PC-3 (cell line): ENCODE measurements at regions of chr2 and their contacts with region 1.

Region 1: DNA sequence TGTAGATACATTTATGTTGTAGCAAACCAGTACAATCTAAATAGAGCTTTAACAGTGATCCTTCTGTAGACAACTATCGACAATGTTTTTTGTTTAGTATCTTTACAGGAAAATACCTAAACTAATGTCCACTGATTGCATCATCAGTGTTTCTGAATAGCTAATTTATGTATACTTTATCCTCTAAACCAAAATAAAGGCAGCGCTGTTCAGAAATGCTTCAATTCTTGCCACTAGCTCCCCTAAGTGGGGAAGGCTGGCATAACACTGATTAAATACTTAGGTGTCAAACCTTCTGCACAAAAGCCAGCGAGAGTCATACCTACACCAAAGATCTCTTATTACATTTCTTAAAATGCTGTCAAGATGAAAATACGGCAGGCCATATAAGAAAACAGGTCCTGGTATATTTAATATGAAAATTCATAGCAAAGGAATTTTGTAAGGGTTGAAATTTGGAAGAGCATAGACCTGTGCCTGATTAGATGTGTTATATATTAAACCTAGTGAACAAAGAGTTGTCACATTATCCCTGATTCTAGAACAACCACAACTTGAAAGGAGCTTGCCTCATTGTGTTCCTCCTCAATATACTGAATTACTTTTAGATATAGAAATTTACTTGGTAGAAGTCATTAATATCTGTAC is 1693.4 kb upstream of the SLC39A10 start:
- DNase-seq: peak; percentile 66
- ATAC-seq: peak; percentile 70
- H3K4me3 ChIP-seq: no peak overlapping the region
- H3K27ac ChIP-seq: no peak overlapping the region
- H3K4me1 ChIP-seq: no peaks in the 10 kb centered on the region
- H3K27me3 ChIP-seq: no peaks in the 10 kb centered on the region
- CTCF ChIP-seq: peak; percentile 82

Region 2: DNA sequence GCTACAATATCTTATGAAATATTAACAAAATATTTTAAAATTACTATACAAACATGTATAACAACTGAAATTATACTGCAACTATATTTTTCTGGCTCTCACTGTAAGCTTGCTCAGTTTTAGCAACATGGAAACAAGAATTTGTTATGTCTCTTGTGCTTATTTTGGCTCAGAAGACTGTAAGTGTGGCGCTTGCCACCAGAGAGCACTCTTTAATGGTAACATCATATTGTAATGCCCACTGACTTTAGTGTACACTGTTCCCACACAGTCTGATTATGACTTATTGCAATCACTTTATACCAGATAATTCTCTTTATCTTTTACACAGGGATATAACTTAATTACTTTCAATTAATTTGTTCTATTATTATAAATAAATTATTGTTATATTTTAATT is 268.2 kb before region 1 on chr2:
- CTCF ChIA-PET with region 1: interaction called, 3 read pairs
- POLR2A ChIA-PET with region 1: no interaction called
- intact Hi-C with region 1: loop called (anchors 1 kb)
- DNase-seq: peak; percentile 56
- ATAC-seq: peak; percentile 91
- H3K4me3 ChIP-seq: no peak overlapping the region
- H3K27ac ChIP-seq: no peak overlapping the region
- H3K4me1 ChIP-seq: no peaks in the 10 kb centered on the region
- H3K27me3 ChIP-seq: no peaks in the 10 kb centered on the region
- CTCF ChIP-seq: peak; percentile 61

Region 3: DNA sequence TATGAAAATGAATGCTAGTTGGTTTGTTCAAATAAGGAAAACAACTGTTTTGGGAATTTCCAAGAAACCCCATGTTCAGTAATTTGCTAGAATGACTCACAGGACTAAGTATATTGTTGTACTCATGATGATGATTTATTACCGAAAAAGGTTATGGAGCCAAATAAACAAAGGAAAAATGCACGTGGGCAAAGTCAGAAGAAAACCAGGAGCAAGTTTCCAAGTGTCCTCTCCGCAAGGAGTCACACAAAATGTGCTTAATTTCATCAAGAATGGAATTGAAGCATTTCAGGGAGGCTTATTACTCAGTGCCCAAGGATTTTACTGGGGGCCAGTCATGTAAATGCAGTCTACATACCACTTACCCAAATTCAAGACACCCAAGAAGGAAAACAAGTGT is 116.5 kb before region 1 on chr2:
- CTCF ChIA-PET with region 1: no interaction called
- POLR2A ChIA-PET with region 1: no interaction called
- intact Hi-C with region 1: loop called (anchors 5 kb)
- DNase-seq: peak; percentile 58
- ATAC-seq: peak; percentile 14; the same call in 1 of the 2 replicates
- H3K4me3 ChIP-seq: no peak overlapping the region
- H3K27ac ChIP-seq: peak overlapping the region; percentile 46
- H3K4me1 ChIP-seq: peaks cover 29% of the 10 kb centered on the region
- H3K27me3 ChIP-seq: no peaks in the 10 kb centered on the region
- CTCF ChIP-seq: no peak

Region 4: DNA sequence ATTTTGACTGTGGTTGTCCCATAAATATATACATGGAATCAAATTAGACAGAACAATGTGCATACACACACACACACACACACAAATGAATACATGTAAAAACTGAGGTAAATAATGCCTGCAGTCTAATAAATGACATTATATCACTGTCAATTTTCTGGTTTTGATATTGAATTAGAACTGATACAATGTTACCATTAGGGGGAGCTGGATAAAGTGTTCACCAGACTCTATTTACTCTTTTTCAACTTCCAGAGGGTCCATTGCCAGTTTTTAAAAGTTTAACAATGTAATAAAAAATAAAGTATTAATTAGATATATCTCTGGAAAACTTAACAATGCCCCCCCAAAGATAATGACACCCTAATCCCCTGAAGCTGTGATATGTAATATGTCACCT is 102.0 kb before region 1 on chr2:
- CTCF ChIA-PET with region 1: no interaction called
- POLR2A ChIA-PET with region 1: no interaction called
- intact Hi-C with region 1: no loop called
- DNase-seq: no peak
- ATAC-seq: no peak
- H3K4me3 ChIP-seq: no peak overlapping the region
- H3K27ac ChIP-seq: no peak overlapping the region
- H3K4me1 ChIP-seq: no peaks in the 10 kb centered on the region
- H3K27me3 ChIP-seq: no peaks in the 10 kb centered on the region
- CTCF ChIP-seq: peak; percentile 47; the same call in 1 of the 2 replicates

Region 5: GRCh38 chr2:194044321-194044720 is 80.7 kb after region 1 on chr2:
- CTCF ChIA-PET with region 1: no interaction called
- POLR2A ChIA-PET with region 1: no interaction called
- intact Hi-C with region 1: no loop called
- DNase-seq: no peak
- ATAC-seq: no peak
- H3K4me3 ChIP-seq: no peak overlapping the region
- H3K27ac ChIP-seq: no peak overlapping the region
- H3K4me1 ChIP-seq: no peaks in the 10 kb centered on the region
- H3K27me3 ChIP-seq: no peaks in the 10 kb centered on the region
- CTCF ChIP-seq: no peak